GM12878 (cell line): ENCODE measurements at regions of chr4 and their contacts with region 1.

Region 1: DNA sequence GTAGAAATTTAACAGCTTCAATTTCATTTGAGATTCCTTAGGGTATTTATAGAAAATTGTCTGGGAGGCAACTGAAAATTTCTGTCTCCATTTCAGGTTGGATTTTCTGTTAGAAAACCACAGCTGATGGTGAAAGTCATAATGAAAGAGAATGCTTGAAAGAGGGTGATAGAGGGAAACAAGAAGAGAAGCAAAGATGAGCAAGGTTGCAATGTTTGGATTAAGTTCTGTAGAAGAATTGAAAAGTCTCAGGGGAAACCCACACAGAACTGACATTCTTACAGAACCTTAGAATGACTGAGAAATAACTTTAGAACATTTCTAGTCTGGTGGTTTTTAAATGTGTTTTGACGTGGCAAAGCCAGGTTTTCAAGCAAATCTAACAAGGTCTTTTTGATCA is 14.7 kb downstream of the GBA3 start:
- DNase-seq: no peak
- ATAC-seq: peak; percentile 83
- H3K4me3 ChIP-seq: no peak overlapping the region
- H3K27ac ChIP-seq: no peak overlapping the region
- H3K4me1 ChIP-seq: no peaks in the 10 kb centered on the region
- H3K27me3 ChIP-seq: no peaks in the 10 kb centered on the region; a peak in 1 of 4 replicates
- CTCF ChIP-seq: no peak
- EP300 ChIP-seq: peak in 1 of 2 experiments; percentile 49; a peak in 1 of 4 replicates
- POLR2A ChIP-seq: no peak
- RAD21 ChIP-seq: no peak

Region 2: DNA sequence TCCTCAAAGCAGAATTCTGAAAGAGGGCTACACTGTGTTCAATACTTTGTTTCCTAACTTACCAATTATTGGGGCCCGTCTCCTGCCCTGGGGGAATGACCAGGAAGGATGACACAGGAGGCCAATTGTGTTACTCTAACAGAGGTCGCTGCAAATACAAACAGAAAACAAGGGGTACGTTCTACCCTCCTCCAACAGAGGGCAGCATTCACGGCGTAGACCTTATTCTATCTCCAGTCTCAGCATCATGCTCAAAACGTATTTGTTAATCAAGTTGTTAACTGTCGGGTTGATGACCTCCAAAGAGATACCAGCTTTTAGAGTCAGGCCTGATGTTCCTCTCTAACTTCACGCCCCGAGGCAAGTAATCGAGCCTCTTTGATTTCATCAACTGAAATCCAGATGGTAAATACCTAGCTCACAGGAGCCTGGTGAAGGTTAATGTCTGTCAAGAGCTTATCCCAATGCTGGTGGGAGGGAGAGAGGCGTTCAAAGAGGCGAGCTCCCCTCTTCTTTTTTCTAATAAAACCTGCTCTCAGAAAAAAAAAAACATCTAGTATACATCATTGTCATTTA is 577.8 kb before region 1 on chr4:
- CTCF ChIA-PET with region 1: no interaction called
- POLR2A ChIA-PET with region 1: no interaction called
- RAD21 ChIA-PET with region 1: no interaction called
- SMC1A ChIA-PET with region 1: no interaction called
- in situ Hi-C with region 1: no loop called
- intact Hi-C with region 1: loop called (anchors 10 kb)
- DNase-seq: no peak
- ATAC-seq: peak; percentile 83
- H3K4me3 ChIP-seq: no peak overlapping the region
- H3K27ac ChIP-seq: no peak overlapping the region
- H3K4me1 ChIP-seq: no peaks in the 10 kb centered on the region
- H3K27me3 ChIP-seq: no peaks in the 10 kb centered on the region
- CTCF ChIP-seq: peak; percentile 14 to 53 (median 52); a peak in 4 of 6 replicates
- EP300 ChIP-seq: no peak
- POLR2A ChIP-seq: no peak
- RAD21 ChIP-seq: no peak

Region 3: GRCh38 chr4:22688236-22688635 is 19.2 kb before region 1 on chr4:
- CTCF ChIA-PET with region 1: interaction called, 14 read pairs
- POLR2A ChIA-PET with region 1: interaction called, 6 read pairs
- RAD21 ChIA-PET with region 1: interaction called, 5 read pairs
- SMC1A ChIA-PET with region 1: interaction called, 6 read pairs
- in situ Hi-C with region 1: no loop called
- intact Hi-C with region 1: no loop called
- DNase-seq: no peak
- ATAC-seq: no peak
- H3K4me3 ChIP-seq: no peak overlapping the region
- H3K27ac ChIP-seq: no peak overlapping the region
- H3K4me1 ChIP-seq: no peaks in the 10 kb centered on the region
- H3K27me3 ChIP-seq: no peaks in the 10 kb centered on the region
- CTCF ChIP-seq: no peak
- EP300 ChIP-seq: no peak
- POLR2A ChIP-seq: no peak
- RAD21 ChIP-seq: no peak

Region 4: GRCh38 chr4:22730021-22730420 is 22.6 kb after region 1 on chr4:
- CTCF ChIA-PET with region 1: no interaction called
- POLR2A ChIA-PET with region 1: interaction called, 6 read pairs
- RAD21 ChIA-PET with region 1: interaction called, 6 read pairs
- SMC1A ChIA-PET with region 1: interaction called, 11 read pairs
- in situ Hi-C with region 1: no loop called
- intact Hi-C with region 1: no loop called
- DNase-seq: no peak
- ATAC-seq: peak; percentile 79
- H3K4me3 ChIP-seq: no peak overlapping the region
- H3K27ac ChIP-seq: no peak overlapping the region
- H3K4me1 ChIP-seq: no peaks in the 10 kb centered on the region
- H3K27me3 ChIP-seq: no peaks in the 10 kb centered on the region
- CTCF ChIP-seq: no peak
- EP300 ChIP-seq: peak in 1 of 2 experiments; percentile 45; a peak in 1 of 4 replicates
- POLR2A ChIP-seq: no peak
- RAD21 ChIP-seq: no peak

Region 5: DNA sequence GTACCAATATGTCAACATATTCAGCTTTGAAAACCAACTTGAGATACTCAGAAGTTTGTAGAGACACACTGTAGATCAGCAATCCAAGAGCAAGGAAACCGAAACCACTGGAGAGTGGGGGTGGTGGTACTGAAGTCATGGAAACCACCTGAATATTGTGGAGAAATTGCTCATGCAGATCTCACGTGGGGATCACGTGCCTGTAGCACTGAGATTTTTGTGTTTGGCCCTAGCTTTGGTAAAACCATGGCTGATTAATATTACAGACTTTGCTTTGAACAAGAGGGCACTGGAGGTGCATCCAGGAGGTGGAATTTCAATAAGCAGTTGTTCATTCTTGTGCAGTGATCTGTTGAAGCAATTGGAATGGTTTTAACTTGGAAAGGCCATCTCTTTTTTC is 32.6 kb after region 1 on chr4:
- CTCF ChIA-PET with region 1: interaction called, 3 read pairs
- POLR2A ChIA-PET with region 1: interaction called, 6 read pairs
- RAD21 ChIA-PET with region 1: interaction called, 8 read pairs
- SMC1A ChIA-PET with region 1: interaction called, 29 read pairs
- in situ Hi-C with region 1: no loop called
- intact Hi-C with region 1: no loop called
- DNase-seq: no peak
- ATAC-seq: peak; percentile 8
- H3K4me3 ChIP-seq: no peak overlapping the region
- H3K27ac ChIP-seq: no peak overlapping the region
- H3K4me1 ChIP-seq: no peaks in the 10 kb centered on the region
- H3K27me3 ChIP-seq: no peaks in the 10 kb centered on the region
- CTCF ChIP-seq: no peak
- EP300 ChIP-seq: no peak
- POLR2A ChIP-seq: no peak
- RAD21 ChIP-seq: no peak

Region 6: DNA sequence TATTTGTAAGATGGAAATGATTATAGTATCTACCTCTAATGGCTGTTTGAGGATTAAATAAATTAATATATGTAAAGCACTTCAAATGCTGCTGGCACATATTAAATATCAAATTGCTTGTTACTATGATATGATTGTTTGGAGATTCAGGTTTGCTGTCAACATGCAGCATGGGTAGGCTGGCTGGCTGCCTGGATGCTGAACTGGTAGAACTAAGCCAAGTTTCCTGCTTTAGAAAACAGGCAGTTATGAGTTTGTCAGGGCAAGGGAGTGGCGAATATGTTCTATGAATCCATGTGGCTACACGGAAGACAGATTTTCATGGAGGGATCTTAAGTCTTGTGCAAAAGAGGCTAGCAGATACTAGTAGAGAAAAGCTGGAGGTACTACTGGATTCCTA is 224.9 kb after region 1 on chr4:
- CTCF ChIA-PET with region 1: no interaction called
- POLR2A ChIA-PET with region 1: no interaction called
- RAD21 ChIA-PET with region 1: no interaction called
- SMC1A ChIA-PET with region 1: no interaction called
- in situ Hi-C with region 1: no loop called
- intact Hi-C with region 1: no loop called
- DNase-seq: no peak
- ATAC-seq: no peak
- H3K4me3 ChIP-seq: no peak overlapping the region
- H3K27ac ChIP-seq: no peak overlapping the region
- H3K4me1 ChIP-seq: no peaks in the 10 kb centered on the region
- H3K27me3 ChIP-seq: no peaks in the 10 kb centered on the region
- CTCF ChIP-seq: no peak
- EP300 ChIP-seq: no peak
- POLR2A ChIP-seq: no peak
- RAD21 ChIP-seq: no peak